ENCODE measurements at regions of chr10 and their contacts with region 1.

Region 1: GRCh38 chr10:92517034-92517655 is 56.7 kb downstream of the IDE start:
- DNase-seq: no peak

Region 2: DNA sequence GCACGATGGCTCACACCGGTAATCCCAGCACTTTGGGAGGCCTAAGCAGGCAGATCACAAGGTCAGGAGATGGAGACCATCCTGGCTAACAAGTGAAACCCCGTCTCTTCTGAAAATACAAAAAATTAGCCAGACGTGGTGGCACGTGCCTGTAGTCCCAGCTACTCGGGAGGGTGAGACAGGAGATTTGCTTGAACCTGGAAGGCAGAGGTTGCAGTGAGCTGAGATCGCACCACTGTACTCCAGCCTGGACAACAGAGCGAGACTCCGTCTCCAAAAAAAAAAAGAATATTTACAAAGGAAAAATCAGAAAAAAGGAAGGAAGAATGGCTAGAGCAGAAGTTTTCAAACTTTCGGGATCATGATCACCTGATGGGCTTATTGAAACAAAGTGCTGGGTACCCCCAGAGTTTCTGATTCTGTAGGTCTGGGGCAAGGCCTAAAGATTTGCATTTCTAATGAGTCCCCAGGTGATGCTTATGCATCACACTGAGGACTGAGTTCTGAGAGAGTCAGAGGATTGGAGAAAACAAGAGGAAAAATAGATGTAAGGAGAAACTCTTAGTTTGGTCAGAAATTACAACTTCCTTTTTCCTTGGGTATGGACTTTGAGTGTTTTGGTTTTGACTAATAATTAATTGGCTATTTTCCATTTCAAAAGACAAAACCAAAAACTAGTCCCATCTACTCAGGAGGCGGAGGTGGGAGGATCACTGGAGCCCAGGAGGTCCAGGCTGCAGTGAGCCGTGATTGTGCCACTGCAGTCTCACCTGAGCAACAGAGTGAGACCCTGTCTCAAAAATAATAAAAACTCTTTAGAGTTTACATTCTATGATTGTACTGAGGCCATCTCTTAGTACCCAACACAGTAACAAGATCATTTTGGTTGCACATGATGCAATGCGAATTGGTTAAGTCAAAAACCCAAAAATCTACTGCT is 211.7 kb before region 1 on chr10:
- intact Hi-C with region 1: no loop called
- DNase-seq: no peak

Region 3: GRCh38 chr10:92573798-92574547 is 56.8 kb after region 1 on chr10 and contains the start of gene IDE:
- intact Hi-C with region 1: loop called (anchors 2 kb)
- DNase-seq: peak; percentile 95
- total RNA-seq, gene IDE: 44.4 TPM

Measured in cardiac septum (tissue), 1 donor.